Activated naive CD4-positive, alpha-beta T cell treated with anti-CD3 and anti-CD28 coated beads for 36 hours (primary cell): ENCODE measurements at regions of chr10 and their contacts with region 1.

Region 1: GRCh38 chr10:23158370-23158769 is 33.7 kb upstream of the PTF1A start:
- DNase-seq: peak; percentile 61
- H3K4me3 Mint-ChIP-seq: no peak overlapping the region
- H3K27ac Mint-ChIP-seq: no peak overlapping the region
- H3K4me1 Mint-ChIP-seq: peaks cover 8% of the 10 kb centered on the region
- H3K27me3 Mint-ChIP-seq: peaks cover 33% of the 10 kb centered on the region

Region 2: DNA sequence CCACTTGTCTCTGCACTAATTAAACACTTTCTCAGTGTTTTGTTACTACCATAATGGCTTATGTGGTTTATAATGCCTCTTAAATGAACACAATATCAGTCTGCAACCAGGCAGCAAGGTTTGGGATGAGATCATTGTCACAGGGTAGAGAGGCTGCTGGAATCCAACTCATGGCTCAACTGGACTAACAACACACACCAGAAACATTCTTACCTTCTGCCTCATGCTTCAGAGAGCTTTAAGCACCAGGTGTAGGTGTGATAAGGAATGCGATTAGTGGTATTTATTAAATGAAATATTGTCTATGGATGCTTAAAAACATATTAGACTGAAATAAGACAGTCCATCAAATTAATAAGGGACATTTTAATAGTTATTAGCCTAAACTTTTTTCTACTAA is 59.1 kb after region 1 on chr10:
- CTCF ChIA-PET with region 1: no interaction called
- intact Hi-C with region 1: no loop called
- DNase-seq: no peak
- H3K4me3 Mint-ChIP-seq: no peak overlapping the region
- H3K27ac Mint-ChIP-seq: no peak overlapping the region
- H3K4me1 Mint-ChIP-seq: no peaks in the 10 kb centered on the region
- H3K27me3 Mint-ChIP-seq: peaks cover 8% of the 10 kb centered on the region

Region 3: DNA sequence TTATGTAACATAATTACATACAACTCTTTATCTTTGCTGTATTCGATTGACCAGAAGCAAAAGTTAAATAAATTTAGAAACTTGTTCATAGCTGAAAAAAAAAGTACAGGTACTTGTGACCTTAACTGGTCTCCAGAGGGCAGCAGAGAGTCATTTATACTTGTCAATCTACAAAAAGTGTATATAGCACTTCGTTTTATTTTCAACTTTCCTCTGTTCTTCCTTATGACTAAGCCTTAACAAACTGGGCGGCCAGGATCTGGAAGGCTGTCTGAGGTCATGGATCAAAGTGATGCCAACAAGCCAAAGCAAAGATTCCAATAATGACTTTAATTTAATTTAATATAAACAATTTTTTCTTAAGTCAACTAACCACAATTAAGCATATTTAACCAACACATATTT is 156.5 kb after region 1 on chr10:
- CTCF ChIA-PET with region 1: interaction called, 4 read pairs
- intact Hi-C with region 1: loop called (anchors 1 kb)
- DNase-seq: peak; percentile 71
- H3K4me3 Mint-ChIP-seq: no peak overlapping the region
- H3K27ac Mint-ChIP-seq: no peak overlapping the region
- H3K4me1 Mint-ChIP-seq: peaks cover 4% of the 10 kb centered on the region
- H3K27me3 Mint-ChIP-seq: no peaks in the 10 kb centered on the region

Region 4: GRCh38 chr10:23656735-23657134 is 498.4 kb after region 1 on chr10:
- CTCF ChIA-PET with region 1: interaction called, 3 read pairs
- intact Hi-C with region 1: loop called (anchors 5 kb)
- DNase-seq: peak; percentile 16
- H3K4me3 Mint-ChIP-seq: no peak overlapping the region
- H3K27ac Mint-ChIP-seq: no peak overlapping the region
- H3K4me1 Mint-ChIP-seq: peaks cover 2% of the 10 kb centered on the region
- H3K27me3 Mint-ChIP-seq: peaks cover 4% of the 10 kb centered on the region

Region 5: GRCh38 chr10:24360282-24361127 is 1202.1 kb after region 1 on chr10:
- CTCF ChIA-PET with region 1: no interaction called
- intact Hi-C with region 1: loop called (anchors 1 kb)
- DNase-seq: peak; percentile 74
- H3K4me3 Mint-ChIP-seq: no peak overlapping the region
- H3K27ac Mint-ChIP-seq: no peak overlapping the region
- H3K4me1 Mint-ChIP-seq: no peaks in the 10 kb centered on the region
- H3K27me3 Mint-ChIP-seq: peaks cover 4% of the 10 kb centered on the region

Region 6: DNA sequence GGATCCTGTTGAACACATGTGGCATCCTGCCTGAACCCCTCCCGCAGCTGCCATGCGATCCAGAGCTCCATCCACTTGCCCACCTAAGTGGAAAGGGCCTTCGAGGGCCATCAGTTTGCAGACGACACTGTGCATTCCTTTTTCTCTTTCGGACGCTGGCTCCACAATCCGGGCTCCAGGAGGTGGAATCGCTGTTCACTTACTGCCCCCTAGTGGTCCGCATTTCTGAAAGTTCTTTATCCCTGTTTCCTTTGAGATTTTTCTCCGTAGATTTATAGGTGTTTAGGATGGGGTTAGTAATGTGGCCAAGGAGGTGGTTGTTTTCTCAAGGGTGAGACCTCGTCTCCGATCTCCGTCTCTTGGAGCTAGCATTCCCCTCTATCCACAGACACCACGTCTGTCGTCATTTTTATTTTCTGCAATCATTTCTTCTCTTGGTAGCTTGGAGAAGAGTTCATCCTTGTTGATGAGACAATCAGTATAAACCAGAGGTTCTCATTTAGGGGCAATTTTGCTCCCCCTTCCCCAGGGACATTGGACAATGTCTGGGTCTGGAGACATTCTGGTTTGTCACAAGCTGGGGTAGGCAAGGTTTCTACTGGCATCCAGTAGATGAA is 1360.7 kb after region 1 on chr10:
- CTCF ChIA-PET with region 1: interaction called, 6 read pairs
- intact Hi-C with region 1: loop called (anchors 2 kb)
- DNase-seq: peak; percentile 62
- H3K4me3 Mint-ChIP-seq: no peak overlapping the region
- H3K27ac Mint-ChIP-seq: no peak overlapping the region
- H3K4me1 Mint-ChIP-seq: peaks cover 14% of the 10 kb centered on the region
- H3K27me3 Mint-ChIP-seq: peaks cover 7% of the 10 kb centered on the region